HepG2 (cell line): ENCODE measurements at regions of chr20 and their contacts with region 1.

Region 1: DNA sequence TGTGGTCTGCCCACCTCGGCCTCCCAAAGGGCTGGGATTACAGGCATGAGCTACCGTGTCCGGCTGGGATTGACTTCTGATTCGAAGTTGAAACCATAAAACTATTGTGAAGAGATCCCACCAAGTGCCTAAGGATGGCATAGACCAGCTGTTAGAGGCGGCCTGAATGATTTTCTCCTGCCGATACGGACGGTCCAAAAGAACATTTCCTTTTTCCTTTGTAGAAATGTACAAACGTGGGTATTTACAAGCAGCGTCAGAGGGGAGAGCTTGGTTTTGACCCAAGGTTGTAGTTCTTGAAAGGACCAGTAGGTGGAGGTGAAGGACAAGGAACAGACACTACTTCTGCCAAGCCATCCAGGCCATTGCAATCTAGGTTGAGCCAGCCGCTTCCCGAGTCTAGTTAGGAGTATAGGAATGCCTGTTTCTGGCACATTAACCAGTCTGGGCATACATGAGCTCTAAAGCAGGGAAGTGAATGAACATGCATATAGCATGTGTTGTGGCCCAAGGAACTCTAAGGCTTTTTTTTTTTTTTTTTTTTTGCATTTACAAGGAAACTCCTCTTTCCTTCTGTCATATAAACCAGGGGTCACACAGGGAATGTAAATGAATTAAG is 29.1 kb downstream of the MOCS3 start:
- DNase-seq: peak; percentile 89
- ATAC-seq: peak; percentile 90
- H3K4me3 ChIP-seq: no peak overlapping the region
- H3K27ac ChIP-seq: no peak overlapping the region
- H3K4me1 ChIP-seq: peaks cover 35% of the 10 kb centered on the region
- H3K27me3 ChIP-seq: peaks cover 0 to 12% of the 10 kb centered on the region in 2 experiments; a peak in 3 of 5 replicates
- CTCF ChIP-seq: peak; percentile 98
- EP300 ChIP-seq: no peak
- POLR2A ChIP-seq: no peak
- RAD21 ChIP-seq: peak; percentile 92

Region 2: DNA sequence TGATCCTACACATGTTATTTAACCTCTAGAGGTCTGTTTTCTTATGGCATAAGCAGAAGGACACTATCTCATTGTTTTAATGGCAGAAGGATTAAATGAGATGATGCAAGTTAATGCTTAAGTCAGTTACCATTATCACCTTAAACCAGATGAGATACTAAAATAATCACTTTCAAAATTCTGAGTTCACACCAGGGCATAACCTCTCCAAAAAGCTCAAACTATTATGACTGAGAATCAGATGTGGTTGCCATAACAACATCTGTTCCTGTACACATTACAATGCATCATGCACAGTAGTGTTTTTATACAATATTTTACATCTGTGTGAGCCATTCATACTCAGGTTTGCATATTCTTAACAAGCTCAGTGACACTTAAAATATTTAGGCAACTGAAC is 66.7 kb before region 1 on chr20:
- CTCF ChIA-PET with region 1: no interaction called
- POLR2A ChIA-PET with region 1: no interaction called
- in situ Hi-C with region 1: no loop called
- intact Hi-C with region 1: no loop called
- DNase-seq: no peak
- ATAC-seq: no peak
- H3K4me3 ChIP-seq: no peak overlapping the region
- H3K27ac ChIP-seq: no peak overlapping the region
- H3K4me1 ChIP-seq: peaks cover 10% of the 10 kb centered on the region
- H3K27me3 ChIP-seq: no peaks in the 10 kb centered on the region
- CTCF ChIP-seq: no peak
- EP300 ChIP-seq: no peak
- POLR2A ChIP-seq: no peak
- RAD21 ChIP-seq: no peak

Region 3: DNA sequence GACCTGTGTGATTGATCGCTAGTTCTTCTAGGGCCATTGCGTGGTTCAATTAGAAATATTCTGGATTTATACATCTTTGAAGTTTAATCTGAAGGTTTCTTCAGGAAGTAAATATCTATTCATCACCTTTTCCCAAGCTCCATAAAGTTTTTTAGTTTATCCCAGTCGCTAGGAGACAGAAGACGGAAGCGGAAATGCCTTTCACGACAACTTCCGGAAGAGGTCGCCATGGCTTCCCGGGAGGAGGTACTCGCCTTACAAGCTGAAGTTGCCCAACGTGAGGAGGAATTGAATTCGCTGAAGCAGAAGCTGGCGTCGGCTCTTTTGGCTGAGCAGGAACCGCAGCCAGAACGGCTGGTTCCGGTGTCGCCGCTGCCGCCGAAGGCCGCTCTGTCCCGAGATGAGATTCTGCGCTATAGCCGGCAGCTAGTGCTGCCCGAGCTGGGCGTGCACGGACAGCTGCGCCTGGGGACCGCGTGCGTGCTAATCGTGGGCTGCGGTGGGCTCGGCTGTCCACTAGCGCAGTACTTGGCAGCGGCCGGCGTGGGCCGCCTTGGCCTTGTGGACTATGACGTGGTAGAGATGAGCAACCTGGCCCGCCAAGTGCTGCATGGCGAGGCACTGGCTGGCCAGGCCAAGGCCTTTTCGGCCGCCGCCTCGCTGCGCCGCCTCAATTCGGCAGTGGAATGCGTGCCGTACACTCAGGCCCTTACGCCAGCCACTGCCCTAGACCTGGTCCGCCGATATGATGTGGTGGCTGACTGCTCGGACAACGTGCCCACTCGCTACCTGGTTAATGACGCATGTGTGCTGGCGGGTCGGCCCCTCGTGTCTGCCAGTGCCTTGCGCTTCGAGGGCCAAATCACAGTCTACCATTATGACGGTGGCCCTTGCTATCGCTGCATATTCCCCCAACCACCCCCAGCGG is 28.8 kb before region 1 on chr20 and contains the start of gene MOCS3:
- CTCF ChIA-PET with region 1: no interaction called
- POLR2A ChIA-PET with region 1: interaction called, 6 read pairs
- in situ Hi-C with region 1: no loop called
- intact Hi-C with region 1: loop called (anchors 2 kb)
- DNase-seq: peak; percentile 97
- ATAC-seq: peak; percentile 84
- H3K4me3 ChIP-seq: peak within 1 kb of the TSS; percentile 85 to 97 (median 97)
- H3K27ac ChIP-seq: peak within 1 kb of the TSS; percentile 86
- H3K4me1 ChIP-seq: peaks cover 44% of the 10 kb centered on the region
- H3K27me3 ChIP-seq: no peaks in the 10 kb centered on the region; a peak in 1 of 5 replicates
- CTCF ChIP-seq: peak; percentile 14; the same call in 1 of the 2 replicates
- EP300 ChIP-seq: no peak
- POLR2A ChIP-seq: peak; percentile 55 to 82
- RAD21 ChIP-seq: 0 out of 2 replicates have a peak, but pooled peaks have one; percentile 42
- total RNA-seq, gene MOCS3: 8.4 and 9.7 TPM in 2 replicates

Region 4: GRCh38 chr20:51014797-51015722 is 27.4 kb after region 1 on chr20:
- CTCF ChIA-PET with region 1: no interaction called
- POLR2A ChIA-PET with region 1: no interaction called
- in situ Hi-C with region 1: no loop called
- intact Hi-C with region 1: no loop called
- DNase-seq: peak; percentile 47
- ATAC-seq: peak; percentile 79
- H3K4me3 ChIP-seq: no peak overlapping the region
- H3K27ac ChIP-seq: no peak overlapping the region
- H3K4me1 ChIP-seq: no peaks in the 10 kb centered on the region
- H3K27me3 ChIP-seq: peaks cover under 1 to 48% of the 10 kb centered on the region in 2 experiments; a peak in 4 of 5 replicates
- CTCF ChIP-seq: peak; percentile 82
- EP300 ChIP-seq: no peak
- POLR2A ChIP-seq: no peak
- RAD21 ChIP-seq: 0 out of 2 replicates have a peak, but pooled peaks have one; percentile 12

Region 5: DNA sequence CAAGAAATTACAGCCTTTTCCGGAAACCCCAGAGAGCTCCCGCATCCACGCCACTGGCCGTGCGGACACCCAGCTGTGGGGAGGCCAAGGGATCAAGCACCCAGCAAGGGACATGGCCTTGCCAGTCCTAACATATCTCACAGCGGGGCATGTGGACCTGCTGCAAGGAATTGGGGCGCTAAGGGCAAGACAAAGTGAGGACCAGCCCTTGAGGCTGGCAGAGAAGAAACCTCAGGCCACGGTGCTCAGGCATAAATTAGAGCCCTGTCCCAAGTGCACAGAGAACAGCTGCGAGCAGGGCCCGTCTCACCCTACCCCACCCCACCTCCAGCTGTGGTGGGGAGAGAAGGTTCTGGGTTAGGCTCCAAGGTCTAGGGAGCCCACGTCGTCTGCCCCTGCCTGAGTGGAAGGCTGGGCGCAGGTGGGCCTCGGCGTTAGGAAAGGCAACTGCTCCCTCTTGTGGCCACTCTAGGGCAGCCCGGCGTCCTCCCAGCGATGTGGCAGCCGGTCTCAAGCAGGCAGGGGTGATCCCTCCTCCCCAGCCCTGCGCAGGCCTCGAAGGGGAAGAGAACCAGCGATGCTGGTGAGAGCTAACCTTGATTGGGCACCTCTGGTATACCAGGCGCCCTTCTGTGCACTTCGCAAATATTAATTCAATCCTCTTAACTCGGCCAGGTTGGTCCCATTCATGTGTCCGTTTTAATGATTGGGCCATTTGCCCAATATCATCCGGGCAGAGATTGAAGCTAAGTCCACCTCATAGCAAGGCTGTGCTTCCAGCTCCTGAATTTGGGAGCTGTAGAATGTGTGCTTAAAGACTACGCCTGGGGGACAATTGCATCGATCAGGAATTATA is 319.0 kb after region 1 on chr20:
- CTCF ChIA-PET with region 1: interaction called, 45 read pairs
- POLR2A ChIA-PET with region 1: no interaction called
- in situ Hi-C with region 1: loop called (anchors 5 kb)
- intact Hi-C with region 1: loop called (anchors 1 kb)
- DNase-seq: peak; percentile 56
- ATAC-seq: peak; percentile 99
- H3K4me3 ChIP-seq: no peak overlapping the region
- H3K27ac ChIP-seq: no peak overlapping the region
- H3K4me1 ChIP-seq: no peaks in the 10 kb centered on the region
- H3K27me3 ChIP-seq: peaks cover 0 to 29% of the 10 kb centered on the region in 2 experiments; a peak in 3 of 5 replicates
- CTCF ChIP-seq: peak; percentile 100
- EP300 ChIP-seq: no peak
- POLR2A ChIP-seq: no peak
- RAD21 ChIP-seq: peak; percentile 98

Region 6: DNA sequence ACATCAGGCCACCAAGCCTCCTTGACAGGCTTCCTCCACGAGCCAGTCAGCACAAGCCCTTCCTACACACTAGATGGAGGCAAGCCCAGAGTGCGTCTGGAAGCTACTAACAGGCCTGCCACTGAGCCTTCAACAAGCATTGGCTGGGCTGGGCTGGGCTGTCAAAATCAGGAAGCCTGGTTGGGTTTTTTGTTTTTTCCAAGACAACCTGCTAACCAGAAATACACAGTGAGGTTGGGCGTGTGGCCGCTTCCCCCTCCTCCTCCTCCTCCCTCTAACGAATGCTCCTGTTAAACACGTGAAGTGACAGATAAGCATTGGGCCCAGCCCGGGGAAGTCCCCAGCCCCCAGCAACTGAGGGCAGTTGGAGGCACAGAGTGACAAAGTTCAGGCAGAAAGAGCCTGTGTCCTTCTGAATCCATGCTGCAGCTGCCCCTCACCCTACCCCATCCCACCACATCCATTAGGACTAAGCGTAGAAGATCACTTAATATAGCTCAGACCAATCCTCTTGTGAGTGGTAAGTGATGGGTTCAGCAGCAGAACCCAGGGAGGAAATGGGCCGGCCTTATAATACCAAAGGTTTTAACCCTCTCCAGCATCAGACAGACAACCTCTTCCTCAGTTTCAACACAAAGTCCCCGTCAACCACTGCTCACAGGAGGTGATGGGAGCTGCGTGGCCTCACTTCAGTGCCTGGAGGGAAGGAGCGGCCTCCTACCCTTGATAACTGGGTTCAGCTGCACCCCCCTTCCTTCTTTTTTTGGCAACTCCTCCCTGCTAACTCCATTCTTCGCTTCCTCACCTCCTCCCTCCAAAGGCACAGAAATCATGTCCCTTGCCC is 553.7 kb after region 1 on chr20:
- CTCF ChIA-PET with region 1: no interaction called
- POLR2A ChIA-PET with region 1: no interaction called
- in situ Hi-C with region 1: no loop called
- intact Hi-C with region 1: loop called (anchors 10 kb)
- DNase-seq: peak; percentile 87
- ATAC-seq: peak; percentile 82
- H3K4me3 ChIP-seq: peak overlapping the region; percentile 76 to 90 (median 85)
- H3K27ac ChIP-seq: peak overlapping the region; percentile 77
- H3K4me1 ChIP-seq: peaks cover 33% of the 10 kb centered on the region
- H3K27me3 ChIP-seq: peaks cover 0 to 17% of the 10 kb centered on the region in 2 experiments; a peak in 3 of 5 replicates
- CTCF ChIP-seq: no peak; the same call in 1 of the 2 replicates
- EP300 ChIP-seq: peak in 1 of 2 experiments; percentile 77; a peak in 2 of 4 replicates
- POLR2A ChIP-seq: peak; percentile 35 to 71; a peak in 2 of 4 replicates
- RAD21 ChIP-seq: no peak

Region 7: GRCh38 chr20:51624157-51624731 is 636.5 kb after region 1 on chr20:
- CTCF ChIA-PET with region 1: no interaction called
- POLR2A ChIA-PET with region 1: no interaction called
- in situ Hi-C with region 1: no loop called
- intact Hi-C with region 1: loop called (anchors 10 kb)
- DNase-seq: peak; percentile 59
- ATAC-seq: peak; percentile 71
- H3K4me3 ChIP-seq: no peak overlapping the region
- H3K27ac ChIP-seq: no peak overlapping the region
- H3K4me1 ChIP-seq: peaks cover 14% of the 10 kb centered on the region
- H3K27me3 ChIP-seq: no peaks in the 10 kb centered on the region
- CTCF ChIP-seq: peak; percentile 85
- EP300 ChIP-seq: no peak
- POLR2A ChIP-seq: no peak
- RAD21 ChIP-seq: peak; percentile 75